ENCODE measurements at regions of chr18 and their contacts with region 1.

Region 1: GRCh38 chr18:55664781-55665271 is 76.8 kb upstream of the TCF4 start:
- DNase-seq: no peak
- H3K4me3 ChIP-seq: no peak overlapping the region
- H3K27ac ChIP-seq: no peak overlapping the region
- H3K4me1 ChIP-seq: no peaks in the 10 kb centered on the region
- H3K27me3 ChIP-seq: no peaks in the 10 kb centered on the region
- CTCF ChIP-seq: no peak
- EP300 ChIP-seq: no peak
- POLR2A ChIP-seq: no peak

Region 2: GRCh38 chr18:54750350-54750749 is 914.5 kb before region 1 on chr18:
- in situ Hi-C with region 1: no loop called
- intact Hi-C with region 1: loop called (anchors 5 kb)
- DNase-seq: no peak
- H3K4me3 ChIP-seq: no peak overlapping the region
- H3K27ac ChIP-seq: peak overlapping the region in 1 of 4 donors; percentile 10
- H3K4me1 ChIP-seq: peaks cover 0 to 10% (median 3%) of the 10 kb centered on the region in 4 donors
- H3K27me3 ChIP-seq: no peaks in the 10 kb centered on the region
- CTCF ChIP-seq: no peak
- EP300 ChIP-seq: no peak
- POLR2A ChIP-seq: no peak

Region 3: DNA sequence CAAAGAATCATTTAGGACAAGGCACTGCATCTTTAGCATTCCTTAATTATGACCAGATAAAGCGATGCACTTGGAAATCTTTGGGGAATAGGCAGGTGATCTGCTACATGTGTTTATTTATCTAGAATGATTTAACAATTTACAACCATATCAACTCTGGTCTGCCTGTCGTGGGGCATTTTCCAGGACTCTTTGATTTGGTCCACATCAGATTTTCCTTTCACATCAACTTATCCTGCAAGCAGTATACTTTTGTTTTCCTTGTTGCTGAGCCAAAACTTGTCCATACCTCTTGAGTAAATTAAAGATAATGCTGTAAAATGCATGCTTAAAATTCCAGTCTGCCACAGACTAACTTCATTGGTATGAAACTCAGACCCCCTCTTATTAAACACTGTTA is 235.6 kb after region 1 on chr18:
- in situ Hi-C with region 1: no loop called
- intact Hi-C with region 1: no loop called
- DNase-seq: no peak
- H3K4me3 ChIP-seq: no peak overlapping the region
- H3K27ac ChIP-seq: no peak overlapping the region
- H3K4me1 ChIP-seq: no peaks in the 10 kb centered on the region
- H3K27me3 ChIP-seq: no peaks in the 10 kb centered on the region
- CTCF ChIP-seq: no peak
- EP300 ChIP-seq: no peak
- POLR2A ChIP-seq: no peak